WTC11 (cell line): ENCODE measurements at regions of chr11 and their contacts with region 1.

Region 1: GRCh38 chr11:86608251-86608799 is 64.1 kb downstream of the ME3 start:
- DNase-seq: peak; percentile 56
- ATAC-seq: peak; percentile 84
- H3K4me3 Mint-ChIP-seq: 0 out of 2 replicates have a peak overlapping the region, but pooled peaks have one; percentile 12
- H3K27ac Mint-ChIP-seq: no peak overlapping the region
- H3K4me1 Mint-ChIP-seq: peaks cover 26% of the 10 kb centered on the region
- H3K27me3 Mint-ChIP-seq: no peaks in the 10 kb centered on the region
- CTCF ChIP-seq: peak; percentile 66; the same call in 1 of the 2 replicates

Region 2: DNA sequence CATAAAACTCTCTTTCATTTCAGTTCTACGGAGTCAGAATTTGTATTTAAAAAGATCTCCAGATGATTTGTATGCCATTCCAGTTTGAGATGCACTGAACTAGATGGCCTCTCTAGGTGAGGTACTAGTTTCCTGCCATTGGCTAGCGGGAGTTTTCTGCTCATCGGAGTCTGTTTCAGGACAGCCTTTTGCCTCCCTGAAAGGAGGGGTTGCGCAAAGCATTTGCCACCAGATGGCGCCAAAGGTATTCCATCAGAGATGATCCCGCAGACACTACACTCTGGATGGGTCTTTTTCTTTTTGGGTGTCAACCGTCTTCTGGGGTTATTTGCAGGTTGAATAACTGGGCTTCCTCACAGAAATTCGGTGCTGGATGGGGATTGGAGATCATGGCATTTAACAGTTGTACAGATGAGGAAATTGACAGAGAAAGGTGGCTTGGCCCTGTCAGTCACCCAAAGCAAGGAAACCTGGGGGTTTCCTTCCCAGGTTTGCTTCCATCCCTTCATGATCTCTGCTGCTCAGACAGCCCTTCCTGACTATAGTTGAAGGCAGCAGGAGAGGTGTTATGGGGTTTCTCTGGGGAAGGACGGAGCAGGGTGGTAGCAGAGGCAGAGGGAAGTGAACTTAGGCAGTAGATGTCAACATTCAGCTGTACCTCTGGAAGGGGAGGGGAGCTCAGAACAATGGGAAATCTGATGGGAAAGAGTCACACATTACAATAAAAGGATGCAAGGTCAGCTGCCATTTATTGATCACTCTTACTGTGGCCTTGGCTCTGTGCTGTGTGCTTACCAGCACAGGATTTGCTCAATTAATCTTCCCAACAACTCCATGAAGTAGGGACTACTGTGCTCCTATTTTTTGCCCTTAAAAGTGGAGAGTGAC is 152.0 kb before region 1 on chr11:
- CTCF ChIA-PET with region 1: interaction called, 12 read pairs
- POLR2A ChIA-PET with region 1: no interaction called
- DNase-seq: peak; percentile 91
- ATAC-seq: peak; percentile 92
- H3K4me3 Mint-ChIP-seq: no peak overlapping the region
- H3K27ac Mint-ChIP-seq: no peak overlapping the region
- H3K4me1 Mint-ChIP-seq: peaks cover 13% of the 10 kb centered on the region
- H3K27me3 Mint-ChIP-seq: no peaks in the 10 kb centered on the region
- CTCF ChIP-seq: peak; percentile 77

Region 3: DNA sequence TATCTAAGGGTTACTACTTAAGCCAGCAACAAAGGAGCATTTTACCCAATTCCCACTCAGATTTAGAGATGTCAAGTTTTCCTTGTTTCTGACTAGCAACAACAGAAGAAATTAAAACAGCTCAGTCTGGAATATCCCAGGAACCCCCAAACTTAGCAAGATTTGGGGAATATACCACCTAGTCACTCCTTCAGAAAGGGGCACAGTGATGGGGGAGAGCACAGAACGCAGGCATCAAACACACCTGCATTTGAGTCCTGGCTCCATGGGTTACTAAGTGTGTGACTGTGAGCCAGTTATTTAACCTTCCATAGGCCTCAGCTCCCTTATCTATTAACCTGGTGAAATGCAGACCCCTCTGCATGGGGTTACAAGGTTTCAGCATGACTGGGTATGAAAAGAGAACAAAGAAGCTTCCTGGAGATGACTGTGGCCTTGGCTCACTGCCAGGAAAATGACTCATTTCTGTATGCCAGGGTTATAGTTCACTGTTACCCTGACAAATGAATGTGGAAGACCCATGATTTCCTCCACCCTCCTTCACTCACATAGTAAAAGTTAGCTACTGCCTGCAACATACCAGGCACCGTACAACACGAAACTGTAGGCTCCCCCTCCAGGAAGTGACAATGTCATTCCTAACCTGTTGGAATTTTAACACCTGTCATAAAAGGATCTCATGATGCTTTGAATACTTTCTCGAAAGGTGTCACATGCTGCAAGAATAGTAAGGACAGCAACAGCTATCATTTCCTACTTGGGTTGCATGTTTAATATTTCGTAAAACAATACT is 15.5 kb before region 1 on chr11:
- CTCF ChIA-PET with region 1: interaction called, 33 read pairs
- POLR2A ChIA-PET with region 1: no interaction called
- DNase-seq: no peak
- ATAC-seq: peak; percentile 50
- H3K4me3 Mint-ChIP-seq: no peak overlapping the region
- H3K27ac Mint-ChIP-seq: no peak overlapping the region; the same call in 1 of the 2 replicates
- H3K4me1 Mint-ChIP-seq: peaks cover 57% of the 10 kb centered on the region
- H3K27me3 Mint-ChIP-seq: no peaks in the 10 kb centered on the region
- CTCF ChIP-seq: no peak

Region 4: GRCh38 chr11:86671682-86672621 is 63.6 kb after region 1 on chr11 and contains the start of gene ME3:
- CTCF ChIA-PET with region 1: interaction called, 13 read pairs
- POLR2A ChIA-PET with region 1: no interaction called
- DNase-seq: peak; percentile 53
- ATAC-seq: peak; percentile 66
- H3K4me3 Mint-ChIP-seq: peak within 1 kb of the TSS; percentile 71
- H3K27ac Mint-ChIP-seq: no peak within 1 kb of the TSS; the same call in 1 of the 2 replicates
- H3K4me1 Mint-ChIP-seq: peaks cover 16% of the 10 kb centered on the region
- H3K27me3 Mint-ChIP-seq: peaks cover 52% of the 10 kb centered on the region
- CTCF ChIP-seq: no peak
- total RNA-seq, gene ME3: 1.2 to 3.1 TPM (median 1.8 TPM) in 3 replicates

Region 5: DNA sequence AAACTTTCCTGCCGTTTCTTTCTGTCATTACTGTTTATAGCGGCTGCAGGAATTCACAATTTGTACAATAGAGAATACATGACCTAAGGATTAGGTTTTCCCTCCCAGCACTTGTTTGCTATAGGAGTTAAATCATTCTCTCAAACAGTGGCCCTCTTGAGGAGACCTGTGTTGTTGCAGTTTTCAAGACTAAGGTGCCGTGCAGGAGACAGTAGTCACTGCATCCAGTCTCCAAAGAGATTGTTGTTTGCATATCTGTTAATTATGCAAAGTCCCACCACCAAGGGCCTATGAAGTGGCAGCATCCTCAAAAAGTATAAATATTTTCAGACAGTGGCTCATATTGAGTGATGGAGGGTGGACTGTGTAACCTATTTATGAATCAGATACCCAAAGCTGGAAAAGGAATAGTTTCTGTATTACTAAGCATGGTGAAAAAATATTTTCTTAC is 194.3 kb after region 1 on chr11:
- CTCF ChIA-PET with region 1: interaction called, 30 read pairs
- POLR2A ChIA-PET with region 1: no interaction called
- DNase-seq: peak; percentile 25
- ATAC-seq: peak; percentile 46
- H3K4me3 Mint-ChIP-seq: no peak overlapping the region
- H3K27ac Mint-ChIP-seq: no peak overlapping the region
- H3K4me1 Mint-ChIP-seq: peaks cover 28% of the 10 kb centered on the region
- H3K27me3 Mint-ChIP-seq: peaks cover 39% of the 10 kb centered on the region
- CTCF ChIP-seq: peak; percentile 21; the same call in 1 of the 2 replicates